Right lobe of liver (tissue), 6 donors: ENCODE measurements at regions of chr14 and their contacts with region 1.

Region 1: GRCh38 chr14:101408077-101408896 is 153.0 kb upstream of the DIO3 start:
- DNase-seq: no peak
- ATAC-seq: no peak
- H3K4me3 ChIP-seq: no peak overlapping the region
- H3K27ac ChIP-seq: no peak overlapping the region
- H3K4me1 ChIP-seq: peaks cover 0 to 15% (median 7%) of the 10 kb centered on the region in 4 donors
- H3K27me3 ChIP-seq: no peaks in the 10 kb centered on the region
- CTCF ChIP-seq: no peak
- POLR2A ChIP-seq: no peak

Region 2: DNA sequence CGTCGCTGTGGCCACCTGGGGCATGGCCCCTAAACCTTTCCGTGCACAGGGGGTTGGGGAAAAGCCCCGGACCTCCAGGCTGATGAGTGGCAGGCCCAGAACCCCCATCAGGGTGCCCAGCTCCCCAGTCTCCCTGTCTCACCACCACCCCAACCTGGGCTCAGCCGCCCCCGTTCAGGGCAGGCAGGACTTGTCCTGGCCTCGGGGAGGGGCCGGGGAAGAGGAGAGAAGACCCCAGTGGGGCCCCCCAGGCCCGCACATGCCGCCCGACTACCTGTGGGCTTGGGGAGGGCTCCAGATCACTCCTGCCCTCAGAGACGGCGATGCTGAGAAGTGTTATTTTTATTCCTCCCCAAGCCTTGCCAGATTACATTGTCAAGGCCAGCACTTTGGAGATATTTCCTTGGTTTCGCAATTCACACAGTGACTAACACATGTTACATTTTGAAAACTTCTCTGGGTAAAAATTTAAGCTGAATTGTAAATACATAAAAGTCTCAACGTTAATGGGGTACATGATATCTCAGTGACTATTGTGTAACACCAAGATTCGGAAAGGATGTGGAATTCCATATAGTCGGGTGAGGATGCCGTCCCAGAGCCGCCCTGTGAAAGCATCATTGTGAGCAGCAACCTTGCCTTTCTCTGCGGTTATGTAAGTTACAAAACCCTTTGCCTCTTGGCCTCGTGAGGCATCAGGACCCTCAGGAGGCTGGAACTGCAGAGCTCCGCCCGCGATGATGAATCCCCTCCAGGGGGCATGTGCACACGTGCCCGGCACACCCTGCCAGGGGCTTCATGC is 67.4 kb after region 1 on chr14:
- intact Hi-C with region 1: loop called in 1 of 2 experiments (anchors 10 kb)
- DNase-seq: peak in 1 of 3 donors; percentile 40
- ATAC-seq: peak; percentile 6 to 38 (median 28)
- H3K4me3 ChIP-seq: no peak overlapping the region
- H3K27ac ChIP-seq: no peak overlapping the region
- H3K4me1 ChIP-seq: peaks cover 0 to 42% (median 19%) of the 10 kb centered on the region in 4 donors
- H3K27me3 ChIP-seq: no peaks in the 10 kb centered on the region
- CTCF ChIP-seq: no peak
- POLR2A ChIP-seq: no peak

Region 3: GRCh38 chr14:101559624-101560533 is 151.6 kb after region 1 on chr14:
- intact Hi-C with region 1: loop called in 1 of 2 experiments (anchors 10 kb)
- DNase-seq: peak in 2 of 3 donors; percentile 59 to 65
- ATAC-seq: peak; percentile 66 to 79 (median 76)
- H3K4me3 ChIP-seq: peak overlapping the region; percentile 32 to 56 (median 42)
- H3K27ac ChIP-seq: peak overlapping the region in 1 of 3 donors; percentile 40
- H3K4me1 ChIP-seq: peaks cover 0 to 7% (median 0%) of the 10 kb centered on the region in 4 donors
- H3K27me3 ChIP-seq: peaks cover 0 to 13% of the 10 kb centered on the region in 2 donors
- CTCF ChIP-seq: peak in 3 of 4 donors; percentile 8 to 52 (median 31)
- POLR2A ChIP-seq: no peak